ENCODE measurements at regions of chr19 and their contacts with region 1.

Region 1: GRCh38 chr19:14536926-14537692 is 7.7 kb downstream of the TECR start:
- DNase-seq: peak; percentile 91
- H3K4me3 ChIP-seq: peak overlapping the region; percentile 51
- H3K27ac ChIP-seq: peak overlapping the region; percentile 20
- H3K4me1 ChIP-seq: peaks cover 16% of the 10 kb centered on the region
- H3K27me3 ChIP-seq: no peaks in the 10 kb centered on the region
- CTCF ChIP-seq: no peak

Region 2: GRCh38 chr19:14550201-14550784 is 13.2 kb after region 1 on chr19:
- CTCF ChIA-PET with region 1: interaction called, 15 read pairs
- POLR2A ChIA-PET with region 1: no interaction called
- intact Hi-C with region 1: no loop called
- DNase-seq: peak; percentile 34 to 83
- H3K4me3 ChIP-seq: no peak overlapping the region
- H3K27ac ChIP-seq: no peak overlapping the region
- H3K4me1 ChIP-seq: peaks cover 16% of the 10 kb centered on the region
- H3K27me3 ChIP-seq: no peaks in the 10 kb centered on the region
- CTCF ChIP-seq: no peak